MCF 10A (cell line): ENCODE measurements at regions of chr16 and their contacts with region 1.

Region 1: GRCh38 chr16:10509534-10510025 is 70.8 kb downstream of the EMP2 start:
- DNase-seq: peak; percentile 82
- H3K4me3 Mint-ChIP-seq: no peak overlapping the region
- H3K27ac Mint-ChIP-seq: no peak overlapping the region
- H3K4me1 Mint-ChIP-seq: no peaks in the 10 kb centered on the region
- H3K27me3 Mint-ChIP-seq: no peaks in the 10 kb centered on the region
- CTCF ChIP-seq: peak; percentile 77

Region 2: DNA sequence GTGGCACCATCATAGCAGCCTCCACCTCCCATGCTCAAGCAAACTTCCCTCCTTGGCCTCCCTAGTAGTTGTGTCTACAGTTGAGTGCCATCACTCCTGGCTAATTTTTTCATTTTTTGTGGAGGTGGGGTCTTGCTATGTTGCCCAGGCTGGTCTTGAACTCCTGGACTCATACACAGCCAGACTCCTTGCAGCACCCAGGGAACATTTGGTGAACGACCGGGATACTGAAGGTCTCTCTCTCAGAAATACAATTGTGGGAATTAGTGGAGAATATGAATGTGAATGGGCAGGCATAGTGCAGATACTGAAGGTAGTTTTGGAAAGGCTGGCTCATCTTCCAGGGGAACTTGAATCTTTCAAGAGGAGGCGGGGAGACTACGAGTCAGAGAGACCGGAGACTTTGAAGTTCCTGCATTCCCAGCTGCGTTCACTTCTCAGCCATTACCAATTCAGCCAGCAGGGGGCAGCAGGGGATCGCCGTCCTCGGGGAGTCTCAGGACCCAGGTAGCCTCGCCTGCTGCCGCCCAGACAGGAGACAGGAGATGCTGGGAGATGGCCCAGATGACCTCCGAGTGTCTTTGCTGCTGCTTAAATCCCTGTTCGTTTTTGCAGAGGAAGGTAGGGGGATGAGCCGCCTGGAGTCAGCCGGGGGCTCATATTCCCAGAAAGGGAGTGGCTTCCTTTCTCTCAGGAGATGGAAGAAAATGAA is 1349.6 kb before region 1 on chr16:
- CTCF ChIA-PET with region 1: interaction called, 3 read pairs
- POLR2A ChIA-PET with region 1: no interaction called
- intact Hi-C with region 1: loop called (anchors 10 kb)
- DNase-seq: peak; percentile 68
- H3K4me3 Mint-ChIP-seq: no peak overlapping the region
- H3K27ac Mint-ChIP-seq: no peak overlapping the region
- H3K4me1 Mint-ChIP-seq: no peaks in the 10 kb centered on the region
- H3K27me3 Mint-ChIP-seq: no peaks in the 10 kb centered on the region
- CTCF ChIP-seq: peak; percentile 65

Region 3: DNA sequence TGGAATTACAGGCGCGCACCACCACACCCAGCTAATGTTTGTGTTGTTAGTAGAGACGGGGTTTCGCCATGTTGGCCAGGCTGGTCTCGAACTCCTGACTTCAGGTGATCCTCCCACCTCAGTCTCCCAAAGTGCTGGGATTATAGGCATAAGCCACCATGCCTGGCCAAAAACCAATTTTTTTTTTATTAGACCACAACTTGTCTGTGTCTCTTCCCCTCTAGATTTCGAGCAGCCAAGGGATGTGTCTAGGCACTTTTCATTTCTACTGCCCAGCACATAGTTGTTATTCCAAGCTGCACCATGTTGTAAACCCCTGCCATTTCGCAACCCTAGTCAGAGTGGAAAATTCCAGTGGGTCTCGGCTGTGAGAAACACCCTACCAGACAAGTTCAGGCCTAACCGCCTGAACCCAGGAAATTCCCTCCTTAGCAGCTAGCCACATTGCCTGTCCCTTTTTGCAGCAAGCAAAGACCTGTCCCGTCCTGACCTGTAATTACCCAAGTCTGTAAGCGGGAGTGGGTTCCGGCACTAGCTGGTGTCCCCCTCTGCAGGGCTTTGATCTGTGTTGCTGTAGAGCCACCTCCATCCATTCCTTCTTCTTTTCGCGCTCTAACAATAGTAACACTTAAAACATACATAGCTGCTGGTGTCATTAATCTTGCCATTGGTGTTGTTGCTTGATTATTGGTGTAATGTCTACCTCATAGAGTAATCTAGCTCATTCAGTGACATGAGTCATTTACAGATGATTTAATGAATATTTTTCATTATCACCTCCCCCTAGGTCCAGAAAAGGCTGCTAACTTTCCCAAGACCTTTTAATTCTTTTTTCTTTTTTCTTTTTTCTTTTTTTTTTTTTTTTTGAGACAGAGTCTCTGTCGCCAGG is 201.0 kb before region 1 on chr16:
- CTCF ChIA-PET with region 1: interaction called, 200 read pairs
- POLR2A ChIA-PET with region 1: interaction called, 3 read pairs
- intact Hi-C with region 1: no loop called
- DNase-seq: peak; percentile 96
- H3K4me3 Mint-ChIP-seq: peak overlapping the region; percentile 12
- H3K27ac Mint-ChIP-seq: peak overlapping the region; percentile 62
- H3K4me1 Mint-ChIP-seq: peaks cover 13% of the 10 kb centered on the region
- H3K27me3 Mint-ChIP-seq: no peaks in the 10 kb centered on the region
- CTCF ChIP-seq: no peak

Region 4: GRCh38 chr16:10558746-10559641 is 49.4 kb after region 1 on chr16:
- CTCF ChIA-PET with region 1: no interaction called
- POLR2A ChIA-PET with region 1: no interaction called
- intact Hi-C with region 1: no loop called
- DNase-seq: peak; percentile 59
- H3K4me3 Mint-ChIP-seq: no peak overlapping the region
- H3K27ac Mint-ChIP-seq: no peak overlapping the region
- H3K4me1 Mint-ChIP-seq: no peaks in the 10 kb centered on the region
- H3K27me3 Mint-ChIP-seq: no peaks in the 10 kb centered on the region
- CTCF ChIP-seq: no peak

Region 5: GRCh38 chr16:10731790-10732189 is 222.2 kb after region 1 on chr16:
- CTCF ChIA-PET with region 1: interaction called, 179 read pairs
- POLR2A ChIA-PET with region 1: interaction called, 5 read pairs
- intact Hi-C with region 1: no loop called
- DNase-seq: no peak
- H3K4me3 Mint-ChIP-seq: no peak overlapping the region
- H3K27ac Mint-ChIP-seq: no peak overlapping the region
- H3K4me1 Mint-ChIP-seq: no peaks in the 10 kb centered on the region
- H3K27me3 Mint-ChIP-seq: no peaks in the 10 kb centered on the region
- CTCF ChIP-seq: no peak

Region 6: DNA sequence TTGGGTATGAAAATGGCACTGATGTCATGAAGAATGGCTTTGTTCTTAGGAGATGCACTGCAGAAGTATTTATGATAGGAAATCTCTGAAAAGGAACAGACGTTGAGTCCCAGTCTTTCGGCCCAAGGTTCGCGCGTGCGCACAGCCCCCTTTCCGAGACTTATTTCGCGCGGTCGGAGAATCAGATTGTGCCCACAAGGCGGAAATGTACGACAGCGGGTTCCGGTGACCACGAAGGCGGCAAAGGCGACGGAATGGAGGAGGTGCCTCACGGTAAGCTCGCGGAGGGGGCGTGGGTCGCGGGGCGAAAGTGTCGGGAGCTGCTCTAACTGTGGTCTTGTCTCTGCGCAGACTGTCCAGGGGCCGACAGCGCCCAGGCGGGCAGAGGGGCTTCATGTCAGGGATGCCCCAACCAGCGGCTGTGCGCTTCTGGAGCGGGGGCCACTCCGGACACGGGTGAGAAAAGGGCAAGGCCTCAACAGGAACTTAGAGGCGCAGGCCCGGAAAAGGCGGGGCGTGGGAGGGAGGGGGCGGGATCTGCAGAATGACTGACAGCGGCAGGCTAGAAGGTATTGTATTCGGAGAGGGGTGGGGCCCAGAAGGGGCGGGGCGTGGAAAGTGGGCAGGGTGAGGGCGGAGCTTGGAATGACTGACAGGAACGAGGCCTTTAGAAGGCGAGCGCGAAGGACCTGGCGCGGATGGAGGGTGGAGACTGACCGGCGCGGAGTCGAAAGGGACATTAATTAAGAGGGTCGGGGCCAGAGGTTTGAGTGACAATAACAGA is 234.2 kb after region 1 on chr16 and contains the start of gene NUBP1:
- CTCF ChIA-PET with region 1: interaction called, 179 read pairs
- POLR2A ChIA-PET with region 1: no interaction called
- intact Hi-C with region 1: no loop called
- DNase-seq: peak; percentile 98
- H3K4me3 Mint-ChIP-seq: peak within 1 kb of the TSS; percentile 95
- H3K27ac Mint-ChIP-seq: peak within 1 kb of the TSS; percentile 100
- H3K4me1 Mint-ChIP-seq: peaks cover 16% of the 10 kb centered on the region
- H3K27me3 Mint-ChIP-seq: no peaks in the 10 kb centered on the region
- CTCF ChIP-seq: no peak
- total RNA-seq, gene NUBP1: 17.3 and 17.8 TPM in 2 replicates

Region 7: DNA sequence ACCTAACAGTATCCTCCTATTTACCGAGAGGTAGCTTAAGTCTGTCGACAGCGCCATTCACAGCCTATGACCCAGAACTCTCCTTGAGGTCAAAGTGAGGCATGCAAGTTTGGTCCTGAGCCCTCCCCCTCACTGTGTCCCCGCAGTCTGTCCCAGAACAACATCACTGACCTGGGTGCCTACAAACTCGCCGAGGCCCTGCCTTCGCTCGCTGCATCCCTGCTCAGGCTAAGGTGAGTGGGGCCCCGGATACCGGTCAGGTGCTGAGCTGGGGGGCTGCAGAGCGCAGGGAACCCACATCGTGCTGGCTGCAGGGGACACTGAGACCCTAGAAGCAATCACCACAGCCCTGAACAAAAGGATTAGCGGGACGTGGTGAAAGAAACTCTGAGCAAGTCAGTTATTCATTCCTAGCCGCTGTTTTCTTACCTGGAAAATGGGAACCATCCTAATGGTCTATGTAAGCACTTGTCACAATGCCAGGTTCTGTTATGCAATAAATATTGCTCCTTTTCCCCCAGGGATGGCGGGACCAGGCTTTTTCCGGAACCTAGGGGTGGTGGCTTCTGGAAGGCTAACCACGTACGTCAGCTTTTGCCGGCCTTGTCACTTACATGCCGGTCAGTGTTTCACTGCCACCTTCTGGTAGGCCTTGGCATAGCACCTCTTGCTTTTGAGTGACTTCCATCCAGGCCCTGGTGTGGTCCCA is 408.9 kb after region 1 on chr16:
- CTCF ChIA-PET with region 1: interaction called, 56 read pairs
- POLR2A ChIA-PET with region 1: interaction called, 6 read pairs
- intact Hi-C with region 1: loop called (anchors 1 kb)
- DNase-seq: peak; percentile 93
- H3K4me3 Mint-ChIP-seq: no peak overlapping the region
- H3K27ac Mint-ChIP-seq: no peak overlapping the region
- H3K4me1 Mint-ChIP-seq: no peaks in the 10 kb centered on the region
- H3K27me3 Mint-ChIP-seq: no peaks in the 10 kb centered on the region
- CTCF ChIP-seq: peak; percentile 90